PC-9 (cell line): ENCODE measurements at regions of chr6 and their contacts with region 1.

Region 1: DNA sequence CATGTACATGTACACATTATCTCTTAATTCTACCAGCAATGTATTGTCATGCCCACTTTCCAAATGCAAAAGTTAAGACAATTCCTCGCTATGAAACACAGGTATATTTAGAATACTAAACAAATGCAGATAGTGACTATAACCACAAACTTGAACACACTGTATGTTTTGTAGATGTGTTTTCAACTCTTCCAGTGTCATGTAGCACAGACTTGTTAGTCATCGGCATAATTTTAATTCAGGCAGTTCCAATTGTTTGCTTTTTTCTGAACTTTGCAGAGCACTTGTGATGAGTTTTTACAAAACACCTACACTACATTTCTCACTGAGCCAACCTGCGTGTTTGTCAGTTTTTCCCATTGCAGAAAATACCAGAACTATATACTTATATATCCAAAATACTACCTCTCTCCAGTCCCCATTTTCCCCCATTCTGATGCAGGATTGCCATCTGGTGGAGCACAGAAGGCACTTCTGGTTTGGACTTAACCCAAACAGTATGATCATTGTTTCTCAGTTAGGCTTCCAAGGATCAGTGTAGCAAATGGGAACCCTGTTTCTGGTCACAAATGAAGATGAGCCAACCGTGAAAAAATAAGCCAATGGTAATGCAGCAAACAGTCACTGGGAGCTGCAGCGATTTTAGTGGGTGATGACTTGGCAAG is 143.4 kb downstream of the ADGRB3 start:
- DNase-seq: no peak
- H3K4me3 ChIP-seq: no peak overlapping the region
- H3K27ac ChIP-seq: no peak overlapping the region
- H3K4me1 ChIP-seq: no peaks in the 10 kb centered on the region
- H3K27me3 ChIP-seq: no peaks in the 10 kb centered on the region
- CTCF ChIP-seq: peak; percentile 52

Region 2: DNA sequence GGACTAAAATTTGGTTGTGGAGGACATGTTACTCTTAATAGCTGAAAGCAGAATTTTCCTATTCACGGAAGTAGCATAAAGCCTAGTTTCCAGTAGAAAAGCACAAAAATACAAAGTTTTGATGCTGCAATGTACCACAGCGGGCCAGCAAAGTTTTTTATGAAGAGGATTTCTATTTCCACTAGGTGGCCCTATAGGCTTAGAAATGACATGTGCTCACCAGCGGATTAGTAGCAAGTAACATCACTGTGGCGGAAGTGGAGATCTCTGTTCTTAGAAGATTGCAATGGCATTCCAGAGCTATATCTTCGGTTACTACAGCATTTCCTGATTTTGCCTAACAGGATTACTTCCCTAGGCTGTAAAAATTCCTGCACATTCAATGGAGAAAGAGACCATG is 1852.4 kb before region 1 on chr6:
- CTCF ChIA-PET with region 1: no interaction called
- POLR2A ChIA-PET with region 1: no interaction called
- intact Hi-C with region 1: loop called (anchors 5 kb)
- DNase-seq: no peak
- H3K4me3 ChIP-seq: no peak overlapping the region
- H3K27ac ChIP-seq: no peak overlapping the region
- H3K4me1 ChIP-seq: no peaks in the 10 kb centered on the region
- H3K27me3 ChIP-seq: no peaks in the 10 kb centered on the region
- CTCF ChIP-seq: peak; percentile 62